ENCODE measurements at regions of chr2 and their contacts with region 1.

Region 1: GRCh38 chr2:186503848-186504606 is 18.0 kb downstream of the ZC3H15 start:
- DNase-seq: no peak
- H3K4me3 ChIP-seq: no peak overlapping the region
- H3K27me3 ChIP-seq: no peaks in the 10 kb centered on the region
- CTCF ChIP-seq: peak; percentile 44

Region 2: GRCh38 chr2:186629250-186629996 is 125.4 kb after region 1 on chr2:
- CTCF ChIA-PET with region 1: interaction called, 12 read pairs
- POLR2A ChIA-PET with region 1: no interaction called
- DNase-seq: no peak
- H3K4me3 ChIP-seq: no peak overlapping the region
- H3K27me3 ChIP-seq: no peaks in the 10 kb centered on the region
- CTCF ChIP-seq: no peak